Activated CD8-positive, alpha-beta memory T cell treated with anti-CD3 and anti-CD28 coated beads, Interleukin-2, amount 10 ng/mL, durations not matched to agents 7 days and 5 days (primary cell): ENCODE measurements at regions of chr17 and their contacts with region 1.

Region 1: DNA sequence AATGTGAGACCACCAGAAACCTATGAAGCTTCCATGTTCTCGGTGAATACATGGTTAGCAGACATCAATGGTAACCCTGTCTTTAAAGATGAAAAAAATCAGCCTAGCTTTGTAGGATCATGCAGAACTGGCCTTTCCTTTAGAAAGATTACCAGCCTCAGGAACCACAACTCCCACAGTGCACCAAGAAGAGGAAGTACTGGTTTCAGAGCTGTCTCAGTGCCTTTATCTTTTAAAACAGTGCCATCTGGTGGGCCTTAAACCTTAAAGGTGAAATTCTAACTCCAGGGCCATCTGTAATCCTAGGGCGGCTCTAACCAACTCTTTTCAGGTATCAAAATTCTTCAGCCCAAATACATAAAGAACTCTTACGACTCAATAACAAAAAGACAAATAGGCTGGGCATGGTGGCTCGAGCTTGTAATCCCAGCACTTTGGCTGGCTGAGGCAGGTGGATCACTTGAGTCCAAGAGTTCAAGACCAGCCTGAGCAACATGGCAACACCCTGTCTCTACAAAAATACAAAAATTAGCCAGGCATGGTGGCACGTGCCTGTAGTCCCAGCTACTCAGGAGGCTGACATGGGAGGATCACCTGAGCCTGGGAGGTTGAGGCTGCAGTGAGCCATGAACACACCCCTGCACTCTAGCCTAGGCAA is 5.4 kb downstream of the ATPAF2 start:
- DNase-seq: peak; percentile 81
- ATAC-seq: peak; percentile 93
- H3K4me3 Mint-ChIP-seq: no peak overlapping the region
- H3K27ac Mint-ChIP-seq: peak overlapping the region; percentile 24
- H3K4me1 Mint-ChIP-seq: peaks cover 42% of the 10 kb centered on the region
- H3K27me3 Mint-ChIP-seq: no peaks in the 10 kb centered on the region

Region 2: GRCh38 chr17:17681187-17681848 is 352.3 kb before region 1 on chr17 and contains the start of gene RAI1:
- CTCF ChIA-PET with region 1: interaction called, 12 read pairs
- DNase-seq: peak; percentile 75
- ATAC-seq: peak; percentile 72
- H3K4me3 Mint-ChIP-seq: peak within 1 kb of the TSS; percentile 85
- H3K27ac Mint-ChIP-seq: peak within 1 kb of the TSS; percentile 83
- H3K4me1 Mint-ChIP-seq: peaks cover 37% of the 10 kb centered on the region
- H3K27me3 Mint-ChIP-seq: peaks cover 13% of the 10 kb centered on the region
- total RNA-seq, gene RAI1: 17.4 to 24.4 TPM

Region 3: DNA sequence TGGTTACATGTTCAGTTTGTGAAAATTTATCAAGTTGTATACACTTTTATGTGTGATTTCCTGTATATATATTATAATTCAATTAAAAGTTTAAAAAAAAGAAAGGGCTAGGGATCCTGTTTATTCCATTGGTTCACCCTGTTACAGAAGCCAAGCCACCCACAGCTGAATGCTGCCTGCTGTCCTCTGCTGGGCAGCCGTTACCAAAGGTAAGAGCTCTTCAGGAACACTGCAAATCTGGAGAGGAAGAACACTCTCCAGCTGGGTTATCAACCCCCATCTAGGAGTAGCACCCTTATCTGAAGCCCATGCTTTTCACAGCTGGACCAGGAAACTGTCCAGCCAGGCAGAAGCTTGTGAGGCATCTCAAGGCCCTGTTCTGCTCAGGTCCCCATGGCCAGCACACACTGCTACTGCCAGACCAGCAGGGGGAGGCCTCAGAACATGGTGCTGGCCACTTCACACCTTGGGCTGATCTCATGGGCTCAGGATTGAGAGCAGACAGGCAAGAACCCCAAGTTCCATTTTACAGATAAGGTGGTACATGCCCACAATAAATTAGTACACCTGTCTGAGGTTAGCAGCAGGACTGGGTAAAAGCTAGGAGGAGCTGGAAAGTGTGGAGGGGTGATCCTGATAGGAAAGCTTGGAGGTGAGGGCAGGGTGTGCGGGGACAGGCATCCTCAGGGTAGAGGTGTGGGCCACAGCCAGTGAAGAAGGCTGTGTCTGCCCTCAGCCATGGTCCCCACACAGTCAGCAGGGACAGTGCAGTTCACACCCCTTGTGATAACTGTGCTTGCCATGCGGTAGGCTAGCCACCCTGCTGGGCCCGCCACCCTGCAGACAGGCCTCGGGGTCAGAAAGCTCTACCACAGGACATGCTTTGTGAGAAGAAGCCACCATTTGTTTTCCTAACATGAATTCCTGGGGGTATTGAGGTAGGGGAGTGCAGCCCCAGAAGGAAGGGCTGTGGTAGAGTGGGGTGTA is 142.5 kb before region 1 on chr17:
- CTCF ChIA-PET with region 1: interaction called, 29 read pairs
- DNase-seq: peak; percentile 71
- ATAC-seq: peak; percentile 87
- H3K4me3 Mint-ChIP-seq: no peak overlapping the region
- H3K27ac Mint-ChIP-seq: no peak overlapping the region
- H3K4me1 Mint-ChIP-seq: no peaks in the 10 kb centered on the region
- H3K27me3 Mint-ChIP-seq: no peaks in the 10 kb centered on the region

Region 4: DNA sequence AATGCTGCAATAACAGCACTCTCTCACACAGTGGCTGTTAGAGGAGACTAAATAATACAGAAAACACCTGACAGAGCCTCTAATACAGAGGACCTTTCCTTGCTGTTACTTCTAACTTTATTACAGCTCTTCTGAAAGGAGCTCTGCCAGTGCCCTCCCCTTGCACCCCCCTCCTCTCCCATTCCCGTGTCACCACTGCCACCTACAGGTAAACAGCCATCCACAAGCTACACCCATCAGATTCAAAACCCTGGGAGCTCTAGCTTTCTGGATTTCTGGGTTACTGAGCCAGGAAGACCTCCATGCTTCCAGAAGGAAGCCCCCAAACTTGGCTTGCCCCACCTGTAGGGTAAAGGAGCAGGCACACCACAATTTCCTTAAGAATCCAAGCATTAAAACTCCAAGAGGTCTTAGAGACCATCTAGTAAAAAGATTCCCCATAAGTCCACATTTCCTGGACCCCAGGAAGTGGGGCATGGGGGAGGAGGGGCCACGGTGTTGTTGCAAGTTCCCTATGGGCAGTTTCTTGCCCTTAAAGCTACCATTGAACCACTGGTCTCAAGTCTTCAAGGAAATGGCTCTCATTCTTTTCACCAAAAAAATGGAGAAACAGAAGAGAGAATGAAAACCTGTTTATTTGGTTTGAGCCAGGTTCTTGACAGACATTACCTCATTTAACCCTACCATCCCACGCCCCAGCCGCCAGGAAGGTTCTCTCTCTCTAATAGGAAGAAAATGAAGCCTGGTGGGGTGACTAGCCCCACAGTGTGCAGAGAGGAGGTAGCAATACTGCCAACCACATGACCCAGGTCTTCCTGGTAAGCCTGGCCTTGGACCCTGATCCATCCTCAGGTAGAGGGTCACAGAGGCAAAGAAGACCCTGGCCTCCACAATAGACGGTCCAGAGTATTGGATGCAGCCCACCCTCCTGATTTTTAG is 114.1 kb before region 1 on chr17:
- CTCF ChIA-PET with region 1: interaction called, 12 read pairs
- DNase-seq: peak; percentile 77
- ATAC-seq: peak; percentile 81
- H3K4me3 Mint-ChIP-seq: no peak overlapping the region
- H3K27ac Mint-ChIP-seq: no peak overlapping the region
- H3K4me1 Mint-ChIP-seq: peaks cover 14% of the 10 kb centered on the region
- H3K27me3 Mint-ChIP-seq: no peaks in the 10 kb centered on the region

Region 5: GRCh38 chr17:17985555-17985954 is 48.0 kb before region 1 on chr17:
- CTCF ChIA-PET with region 1: interaction called, 21 read pairs
- DNase-seq: no peak
- ATAC-seq: peak; percentile 50
- H3K4me3 Mint-ChIP-seq: no peak overlapping the region
- H3K27ac Mint-ChIP-seq: no peak overlapping the region
- H3K4me1 Mint-ChIP-seq: no peaks in the 10 kb centered on the region
- H3K27me3 Mint-ChIP-seq: no peaks in the 10 kb centered on the region

Region 6: GRCh38 chr17:17994271-17995069 is 39.1 kb before region 1 on chr17:
- CTCF ChIA-PET with region 1: interaction called, 16 read pairs
- DNase-seq: no peak
- ATAC-seq: peak; percentile 64
- H3K4me3 Mint-ChIP-seq: no peak overlapping the region
- H3K27ac Mint-ChIP-seq: no peak overlapping the region
- H3K4me1 Mint-ChIP-seq: no peaks in the 10 kb centered on the region
- H3K27me3 Mint-ChIP-seq: no peaks in the 10 kb centered on the region

Region 7: GRCh38 chr17:18070861-18071340 is 37.3 kb after region 1 on chr17:
- CTCF ChIA-PET with region 1: no interaction called
- DNase-seq: peak; percentile 45
- ATAC-seq: peak; percentile 27
- H3K4me3 Mint-ChIP-seq: no peak overlapping the region
- H3K27ac Mint-ChIP-seq: no peak overlapping the region
- H3K4me1 Mint-ChIP-seq: peaks cover 15% of the 10 kb centered on the region
- H3K27me3 Mint-ChIP-seq: peaks cover 15% of the 10 kb centered on the region